Naive thymus-derived CD4-positive, alpha-beta T cell (primary cell): ENCODE measurements at regions of chr12 and their contacts with region 1.

Region 1: GRCh38 chr12:57846577-57847319 is at the start of gene CTDSP2:
- DNase-seq: peak; percentile 59 to 92 (median 82)
- ATAC-seq: peak; percentile 85
- H3K4me3 ChIP-seq: peak within 1 kb of the TSS; percentile 79
- H3K4me3 Mint-ChIP-seq: peak within 1 kb of the TSS; percentile 87 to 97 (median 92)
- H3K27ac ChIP-seq: peak within 1 kb of the TSS; percentile 89
- H3K27ac Mint-ChIP-seq: peak within 1 kb of the TSS; percentile 75 to 94 (median 89)
- H3K4me1 ChIP-seq: peaks cover 15 to 30% of the 10 kb centered on the region in 2 donors
- H3K4me1 Mint-ChIP-seq: peaks cover 48 to 57% (median 50%) of the 10 kb centered on the region in 7 donors
- H3K27me3 ChIP-seq: no peaks in the 10 kb centered on the region
- H3K27me3 Mint-ChIP-seq: peaks cover 0 to 39% (median 9%) of the 10 kb centered on the region in 5 donors
- total RNA-seq, gene CTDSP2: 124 to 295 (median 145) TPM

Region 2: GRCh38 chr12:56152318-56153033 is 1694.3 kb before region 1 on chr12 and contains the start of gene MYL6B:
- CTCF ChIA-PET with region 1: no interaction called
- POLR2A ChIA-PET with region 1: no interaction called
- intact Hi-C with region 1: loop called in 1 of 2 experiments (anchors 5 kb)
- DNase-seq: peak; percentile 79 to 94 (median 87)
- ATAC-seq: peak; percentile 98
- H3K4me3 ChIP-seq: peak within 1 kb of the TSS; percentile 86
- H3K4me3 Mint-ChIP-seq: peak within 1 kb of the TSS; percentile 80 to 96 (median 92)
- H3K27ac ChIP-seq: peak within 1 kb of the TSS; percentile 80
- H3K27ac Mint-ChIP-seq: peak within 1 kb of the TSS; percentile 84 to 99 (median 97)
- H3K4me1 ChIP-seq: peaks cover 22 to 25% of the 10 kb centered on the region in 2 donors
- H3K4me1 Mint-ChIP-seq: peaks cover 17 to 55% (median 39%) of the 10 kb centered on the region in 7 donors
- H3K27me3 ChIP-seq: no peaks in the 10 kb centered on the region
- H3K27me3 Mint-ChIP-seq: no peaks in the 10 kb centered on the region
- total RNA-seq, gene MYL6B: 3.7 to 60.3 (median 8.9) TPM

Region 3: DNA sequence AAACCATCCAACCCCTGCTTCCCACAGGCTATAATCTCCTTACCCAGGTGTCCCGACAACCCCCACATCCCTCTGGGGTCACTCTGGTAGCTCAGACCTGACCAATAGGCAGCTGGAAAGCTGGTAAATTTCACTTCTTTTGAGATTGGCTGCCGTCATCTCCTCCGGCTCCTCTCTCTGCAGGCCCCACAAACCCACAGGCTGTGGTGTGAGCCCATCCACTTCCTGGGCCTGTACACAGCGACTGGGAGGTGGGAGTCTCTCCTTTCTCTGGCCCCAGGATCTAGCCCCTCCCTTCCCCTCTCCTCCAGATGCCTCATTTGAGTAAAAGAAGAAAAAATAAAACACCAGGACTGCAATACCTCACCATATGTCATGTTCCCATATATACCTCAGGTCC is 411.5 kb before region 1 on chr12:
- CTCF ChIA-PET with region 1: no interaction called
- POLR2A ChIA-PET with region 1: no interaction called
- intact Hi-C with region 1: no loop called
- DNase-seq: no peak
- ATAC-seq: no peak
- H3K4me3 ChIP-seq: no peak overlapping the region
- H3K4me3 Mint-ChIP-seq: peak overlapping the region in 1 of 10 donors; percentile 8
- H3K27ac ChIP-seq: no peak overlapping the region
- H3K27ac Mint-ChIP-seq: peak overlapping the region in 5 of 9 donors; percentile 4 to 65 (median 18)
- H3K4me1 ChIP-seq: peaks cover 4 to 5% of the 10 kb centered on the region in 2 donors
- H3K4me1 Mint-ChIP-seq: peaks cover 8 to 19% (median 16%) of the 10 kb centered on the region in 7 donors
- H3K27me3 ChIP-seq: no peaks in the 10 kb centered on the region
- H3K27me3 Mint-ChIP-seq: peaks cover 0 to 8% (median 0%) of the 10 kb centered on the region in 5 donors

Region 4: GRCh38 chr12:57782608-57783465 is 63.9 kb before region 1 on chr12 and contains the start of gene TSFM:
- CTCF ChIA-PET with region 1: no interaction called
- POLR2A ChIA-PET with region 1: no interaction called
- intact Hi-C with region 1: loop called (anchors 1 to 2 kb)
- DNase-seq: peak; percentile 90 to 97 (median 95)
- ATAC-seq: peak; percentile 99
- H3K4me3 ChIP-seq: peak within 1 kb of the TSS; percentile 97
- H3K4me3 Mint-ChIP-seq: peak within 1 kb of the TSS; percentile 96 to 100 (median 99)
- H3K27ac ChIP-seq: peak within 1 kb of the TSS; percentile 85
- H3K27ac Mint-ChIP-seq: peak within 1 kb of the TSS; percentile 95 to 100 (median 99)
- H3K4me1 ChIP-seq: peaks cover 36 to 40% of the 10 kb centered on the region in 2 donors
- H3K4me1 Mint-ChIP-seq: peaks cover 23 to 65% (median 48%) of the 10 kb centered on the region in 7 donors
- H3K27me3 ChIP-seq: no peaks in the 10 kb centered on the region
- H3K27me3 Mint-ChIP-seq: no peaks in the 10 kb centered on the region
- total RNA-seq, gene TSFM: 17.8 to 34.9 (median 22.3) TPM

Region 5: DNA sequence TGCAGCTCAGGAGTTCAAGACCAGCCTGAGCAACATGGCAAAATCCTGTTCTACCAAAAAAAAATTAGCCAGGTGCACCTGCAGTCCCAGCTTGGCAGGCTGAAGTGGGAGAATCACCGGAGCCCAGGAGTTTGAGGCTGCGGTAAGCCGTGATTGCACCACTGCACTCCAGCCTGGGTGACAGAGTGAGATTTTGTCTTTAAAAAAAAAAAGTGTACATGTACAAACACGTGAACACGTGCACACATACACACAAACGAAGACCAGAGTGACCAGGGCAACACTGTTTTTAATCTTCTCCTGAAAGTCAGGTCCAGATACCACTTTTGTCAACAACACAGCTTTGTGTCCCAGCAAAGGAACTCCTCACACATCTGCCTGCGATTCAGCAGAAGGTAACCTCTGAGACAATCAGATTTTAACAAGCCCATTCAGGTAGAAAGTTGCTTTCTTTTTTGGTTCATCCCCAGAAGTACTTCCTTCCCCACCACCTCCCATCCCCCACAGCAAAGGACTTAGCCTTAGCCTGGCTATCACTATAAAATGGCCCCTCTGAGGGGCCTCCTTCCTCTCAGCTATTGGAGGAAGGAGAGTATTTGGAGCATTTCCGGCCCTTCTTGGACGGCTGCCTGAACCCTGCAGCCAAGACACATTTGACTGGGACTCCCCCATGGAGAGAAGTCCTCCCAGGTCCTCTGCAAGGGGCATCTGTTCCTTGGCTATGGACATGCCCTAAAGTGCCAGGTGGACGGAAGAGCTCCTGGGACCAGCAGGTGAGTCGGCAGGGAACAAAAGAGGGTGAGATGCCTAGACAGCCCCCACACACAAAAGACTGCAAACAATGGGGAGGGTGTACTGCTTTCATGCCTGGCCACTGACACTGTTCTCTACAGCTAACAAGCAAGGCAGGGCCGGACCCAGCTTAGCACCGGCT is 10.0 kb before region 1 on chr12:
- CTCF ChIA-PET with region 1: interaction called, 26 read pairs
- POLR2A ChIA-PET with region 1: interaction called, 77 read pairs
- intact Hi-C with region 1: loop called (anchors 1 kb)
- DNase-seq: peak in 6 of 9 donors; percentile 25 to 51 (median 39)
- ATAC-seq: peak; percentile 29
- H3K4me3 ChIP-seq: peak overlapping the region; percentile 53
- H3K4me3 Mint-ChIP-seq: peak overlapping the region; percentile 58 to 97 (median 76)
- H3K27ac ChIP-seq: peak overlapping the region; percentile 89
- H3K27ac Mint-ChIP-seq: peak overlapping the region; percentile 87 to 97 (median 94)
- H3K4me1 ChIP-seq: peaks cover 91 to 95% of the 10 kb centered on the region in 2 donors
- H3K4me1 Mint-ChIP-seq: peaks cover 73 to 99% (median 91%) of the 10 kb centered on the region in 7 donors
- H3K27me3 ChIP-seq: no peaks in the 10 kb centered on the region
- H3K27me3 Mint-ChIP-seq: no peaks in the 10 kb centered on the region

Region 6: DNA sequence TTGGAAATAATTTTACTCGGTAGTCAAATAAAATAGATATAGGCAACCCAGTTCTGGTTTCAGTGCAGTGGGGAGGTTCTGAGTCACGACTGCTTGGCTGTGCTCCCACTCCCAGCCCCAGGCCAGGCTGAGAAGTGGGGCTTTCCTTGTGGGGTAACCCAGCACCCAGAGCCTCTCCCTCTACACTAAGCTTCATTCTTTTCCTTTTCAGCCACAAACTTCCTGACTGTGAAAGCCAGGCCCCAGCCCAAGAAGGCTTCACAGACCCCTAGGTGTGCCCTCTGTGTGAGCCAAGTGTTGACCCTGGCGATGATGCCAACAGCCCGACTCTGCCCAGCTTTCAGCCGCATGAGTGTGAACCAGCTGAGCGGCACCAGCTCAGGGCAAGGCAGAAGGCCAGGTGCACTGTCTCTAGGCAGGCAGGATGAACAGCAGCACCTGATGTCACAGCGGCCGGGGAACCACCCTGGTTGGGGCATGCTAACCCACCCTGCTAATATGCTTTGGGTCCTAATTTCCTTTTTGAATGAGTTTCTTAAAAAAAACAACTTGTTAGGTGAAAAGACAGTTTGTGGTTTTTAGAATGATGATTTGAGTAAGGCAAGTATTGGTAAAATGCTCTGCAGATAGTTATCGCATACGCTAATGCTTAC is 52.4 kb after region 1 on chr12:
- CTCF ChIA-PET with region 1: interaction called, 15 read pairs
- POLR2A ChIA-PET with region 1: interaction called, 27 read pairs
- intact Hi-C with region 1: loop called in 1 of 2 experiments (anchors 2 kb)
- DNase-seq: peak; percentile 41 to 79 (median 53)
- ATAC-seq: peak; percentile 91
- H3K4me3 ChIP-seq: no peak overlapping the region
- H3K4me3 Mint-ChIP-seq: peak overlapping the region; percentile 53 to 88 (median 82)
- H3K27ac ChIP-seq: peak overlapping the region; percentile 66
- H3K27ac Mint-ChIP-seq: peak overlapping the region; percentile 86 to 98 (median 96)
- H3K4me1 ChIP-seq: peaks cover 34 to 49% of the 10 kb centered on the region in 2 donors
- H3K4me1 Mint-ChIP-seq: peaks cover 29 to 60% (median 55%) of the 10 kb centered on the region in 7 donors
- H3K27me3 ChIP-seq: no peaks in the 10 kb centered on the region
- H3K27me3 Mint-ChIP-seq: peaks cover 0 to 2% (median 0%) of the 10 kb centered on the region in 5 donors

Region 7: GRCh38 chr12:57941165-57941894 is 94.6 kb after region 1 on chr12 and contains the start of gene ATP23:
- CTCF ChIA-PET with region 1: no interaction called
- POLR2A ChIA-PET with region 1: no interaction called
- intact Hi-C with region 1: loop called (anchors 1 to 2 kb)
- DNase-seq: peak; percentile 82 to 95 (median 90)
- ATAC-seq: peak; percentile 96
- H3K4me3 ChIP-seq: peak within 1 kb of the TSS; percentile 84
- H3K4me3 Mint-ChIP-seq: peak within 1 kb of the TSS; percentile 87 to 100 (median 98)
- H3K27ac ChIP-seq: peak within 1 kb of the TSS; percentile 90
- H3K27ac Mint-ChIP-seq: peak within 1 kb of the TSS; percentile 93 to 100 (median 99)
- H3K4me1 ChIP-seq: peaks cover 20 to 28% of the 10 kb centered on the region in 2 donors
- H3K4me1 Mint-ChIP-seq: peaks cover 24 to 54% (median 47%) of the 10 kb centered on the region in 7 donors
- H3K27me3 ChIP-seq: no peaks in the 10 kb centered on the region
- H3K27me3 Mint-ChIP-seq: no peaks in the 10 kb centered on the region
- total RNA-seq, gene ATP23: 7.2 to 12.3 (median 8.2) TPM